ENCODE measurements at regions of chr2 and their contacts with region 1.

Region 1: DNA sequence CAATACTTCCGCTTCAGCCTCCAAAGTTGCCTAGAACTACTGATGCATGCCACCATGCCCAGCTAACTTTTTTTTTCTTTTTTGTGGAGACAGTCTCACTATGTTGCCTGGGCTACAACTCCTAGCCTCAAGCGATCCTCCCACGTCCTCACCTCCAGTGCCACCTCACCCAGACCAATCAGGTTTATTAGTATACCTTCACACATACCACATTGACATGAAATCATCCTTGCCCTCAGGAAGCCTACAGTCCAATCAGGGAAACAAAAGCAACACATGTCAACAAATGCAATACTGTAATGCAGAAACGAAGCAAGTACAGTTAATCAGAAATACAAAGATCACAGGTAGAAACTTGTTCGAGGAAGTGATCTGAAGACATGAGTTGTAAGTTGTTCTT is 4.0 kb downstream of the TRIP12 start:
- DNase-seq: no peak
- H3K4me3 ChIP-seq: no peak overlapping the region
- H3K27ac ChIP-seq: no peak overlapping the region
- H3K4me1 ChIP-seq: peaks cover 52% of the 10 kb centered on the region
- H3K27me3 ChIP-seq: no peaks in the 10 kb centered on the region
- CTCF ChIP-seq: no peak
- POLR2A ChIP-seq: no peak

Region 2: GRCh38 chr2:229454934-229455631 is 462.7 kb before region 1 on chr2:
- intact Hi-C with region 1: no loop called
- DNase-seq: no peak
- H3K4me3 ChIP-seq: no peak overlapping the region
- H3K27ac ChIP-seq: no peak overlapping the region
- H3K4me1 ChIP-seq: no peaks in the 10 kb centered on the region
- H3K27me3 ChIP-seq: no peaks in the 10 kb centered on the region
- CTCF ChIP-seq: no peak
- POLR2A ChIP-seq: no peak

Region 3: GRCh38 chr2:229802785-229803184 is 115.0 kb before region 1 on chr2:
- intact Hi-C with region 1: loop called (anchors 2 kb)
- DNase-seq: no peak
- H3K4me3 ChIP-seq: no peak overlapping the region
- H3K27ac ChIP-seq: no peak overlapping the region
- H3K4me1 ChIP-seq: peaks cover 14% of the 10 kb centered on the region
- H3K27me3 ChIP-seq: no peaks in the 10 kb centered on the region
- CTCF ChIP-seq: no peak
- POLR2A ChIP-seq: no peak

Measured in vagina (tissue), 2 donors.